HepG2 (cell line): ENCODE measurements at regions of chr15 and their contacts with region 1.

Region 1: GRCh38 chr15:67501177-67501835 is 19.6 kb upstream of the C15orf61 start:
- DNase-seq: peak; percentile 24
- ATAC-seq: no peak; the same call in 2 of the 3 replicates
- H3K4me3 ChIP-seq: no peak overlapping the region
- H3K27ac ChIP-seq: no peak overlapping the region
- H3K4me1 ChIP-seq: 0 out of 2 replicates have a peak, but pooled peaks cover 4% of the 10 kb centered on the region
- H3K27me3 ChIP-seq: peaks cover 0 to 1% of the 10 kb centered on the region in 2 experiments; a peak in 1 of 5 replicates
- CTCF ChIP-seq: peak; percentile 49
- EP300 ChIP-seq: no peak
- POLR2A ChIP-seq: no peak
- RAD21 ChIP-seq: no peak

Region 2: DNA sequence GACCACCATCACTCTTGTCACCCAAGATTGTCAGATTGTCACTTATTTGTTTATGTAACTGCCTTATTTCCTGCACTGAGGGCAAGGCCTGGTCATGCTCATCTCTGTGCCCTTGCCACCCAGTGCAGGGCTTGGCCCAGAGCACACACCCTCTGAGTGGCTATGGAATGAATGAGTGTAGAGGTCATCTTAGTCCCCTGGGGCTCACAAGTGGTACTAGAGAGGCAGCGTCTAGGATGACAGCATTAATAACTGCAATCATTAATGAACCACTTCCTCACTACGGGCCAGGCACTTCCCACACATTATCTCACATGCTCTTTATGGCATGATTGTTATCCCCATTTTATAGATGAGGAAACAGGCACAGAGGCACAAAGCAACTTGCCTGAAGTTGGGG is 682.2 kb before region 1 on chr15:
- CTCF ChIA-PET with region 1: no interaction called
- POLR2A ChIA-PET with region 1: no interaction called
- in situ Hi-C with region 1: no loop called
- intact Hi-C with region 1: no loop called
- DNase-seq: no peak
- ATAC-seq: no peak
- H3K4me3 ChIP-seq: no peak overlapping the region
- H3K27ac ChIP-seq: no peak overlapping the region
- H3K4me1 ChIP-seq: no peaks in the 10 kb centered on the region
- H3K27me3 ChIP-seq: peaks cover 7 to 30% of the 10 kb centered on the region in 2 experiments
- CTCF ChIP-seq: no peak
- EP300 ChIP-seq: no peak
- POLR2A ChIP-seq: no peak
- RAD21 ChIP-seq: no peak

Region 3: GRCh38 chr15:67833710-67834511 is 332.6 kb after region 1 on chr15:
- CTCF ChIA-PET with region 1: no interaction called
- POLR2A ChIA-PET with region 1: no interaction called
- in situ Hi-C with region 1: no loop called
- intact Hi-C with region 1: loop called (anchors 2 kb)
- DNase-seq: peak; percentile 34
- ATAC-seq: peak; percentile 70
- H3K4me3 ChIP-seq: peak overlapping the region; percentile 61 to 77 (median 63)
- H3K27ac ChIP-seq: no peak overlapping the region
- H3K4me1 ChIP-seq: peaks cover 50% of the 10 kb centered on the region
- H3K27me3 ChIP-seq: peaks cover 5 to 59% of the 10 kb centered on the region in 2 experiments
- CTCF ChIP-seq: peak; percentile 81
- EP300 ChIP-seq: no peak; a peak in 1 of 4 replicates
- POLR2A ChIP-seq: no peak
- RAD21 ChIP-seq: peak; percentile 67